CD8-positive, alpha-beta memory T cell (primary cell): ENCODE measurements at regions of chr11 and their contacts with region 1.

Region 1: DNA sequence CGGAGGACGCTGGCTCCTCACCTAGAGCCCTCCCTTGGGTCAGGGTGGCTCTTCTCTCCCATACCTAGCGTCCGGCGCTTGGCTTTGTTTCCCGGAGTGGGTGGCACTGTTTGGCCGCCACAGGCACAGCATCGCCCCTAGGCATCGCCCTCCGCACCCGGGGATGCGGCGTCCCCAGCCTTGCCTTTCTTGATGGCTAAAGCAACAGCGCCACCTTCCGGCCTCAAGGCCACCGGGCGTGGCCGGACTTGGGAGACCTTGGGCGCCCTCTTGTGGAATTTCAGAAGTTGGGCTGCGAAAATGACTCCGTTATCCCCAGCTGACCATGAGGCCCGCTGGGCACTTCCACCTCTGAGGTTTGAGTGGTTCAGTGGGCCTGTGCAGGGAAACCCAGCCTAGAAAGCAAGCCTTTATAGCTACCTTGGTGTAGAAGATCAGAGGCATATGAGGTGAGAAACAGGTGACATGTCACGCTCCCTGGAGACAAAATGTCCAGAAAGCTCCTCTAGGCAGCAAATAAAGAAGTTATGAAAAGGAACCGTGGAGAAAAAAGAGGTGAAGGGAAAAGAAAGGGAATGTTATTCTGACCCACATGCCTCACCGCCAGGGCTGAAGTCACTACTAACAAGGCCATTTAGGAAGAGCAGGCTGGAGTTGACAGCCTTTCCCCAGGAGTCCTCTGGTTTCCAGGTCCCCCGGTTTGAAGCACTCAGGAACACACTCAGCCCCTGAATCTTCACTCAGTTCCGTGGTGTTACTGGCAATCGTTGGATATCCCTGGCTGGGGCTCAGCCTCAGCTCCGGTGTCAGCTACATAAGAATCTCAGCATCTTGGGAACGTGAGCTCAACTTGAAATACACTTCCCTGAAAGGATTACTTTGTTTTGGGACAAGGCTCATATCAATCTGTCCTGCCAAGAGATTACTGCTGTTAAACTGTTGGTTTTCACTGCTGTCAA is 54.1 kb downstream of the SNX19 start:
- DNase-seq: peak; percentile 78 to 90 (median 81)
- H3K4me3 ChIP-seq: no peak overlapping the region
- H3K4me3 Mint-ChIP-seq: no peak overlapping the region
- H3K27ac ChIP-seq: no peak overlapping the region
- H3K27ac Mint-ChIP-seq: peak overlapping the region in 1 of 8 donors; percentile 33
- H3K4me1 ChIP-seq: peaks cover 4% of the 10 kb centered on the region
- H3K4me1 Mint-ChIP-seq: peaks cover 0 to 8% (median 5%) of the 10 kb centered on the region in 3 donors
- H3K27me3 ChIP-seq: no peaks in the 10 kb centered on the region
- H3K27me3 Mint-ChIP-seq: peaks cover under 1 to 2% of the 10 kb centered on the region in 2 donors

Region 2: GRCh38 chr11:130427581-130428315 is 434.4 kb before region 1 on chr11:
- CTCF ChIA-PET with region 1: interaction called, 115 read pairs
- POLR2A ChIA-PET with region 1: no interaction called
- DNase-seq: peak in 1 of 5 donors; percentile 9
- H3K4me3 ChIP-seq: no peak overlapping the region
- H3K4me3 Mint-ChIP-seq: peak overlapping the region in 3 of 7 donors; percentile 15 to 76 (median 58)
- H3K27ac ChIP-seq: no peak overlapping the region
- H3K27ac Mint-ChIP-seq: no peak overlapping the region
- H3K4me1 ChIP-seq: no peaks in the 10 kb centered on the region
- H3K4me1 Mint-ChIP-seq: peaks cover 14 to 18% (median 14%) of the 10 kb centered on the region in 3 donors
- H3K27me3 ChIP-seq: peaks cover 39% of the 10 kb centered on the region
- H3K27me3 Mint-ChIP-seq: peaks cover 39 to 66% of the 10 kb centered on the region in 2 donors

Region 3: GRCh38 chr11:130850185-130850944 is 11.8 kb before region 1 on chr11:
- CTCF ChIA-PET with region 1: interaction called, 19 read pairs
- POLR2A ChIA-PET with region 1: no interaction called
- DNase-seq: no peak
- H3K4me3 ChIP-seq: no peak overlapping the region
- H3K4me3 Mint-ChIP-seq: no peak overlapping the region
- H3K27ac ChIP-seq: no peak overlapping the region
- H3K27ac Mint-ChIP-seq: peak overlapping the region in 1 of 8 donors; percentile 29
- H3K4me1 ChIP-seq: no peaks in the 10 kb centered on the region
- H3K4me1 Mint-ChIP-seq: no peaks in the 10 kb centered on the region
- H3K27me3 ChIP-seq: no peaks in the 10 kb centered on the region
- H3K27me3 Mint-ChIP-seq: peaks cover 10 to 14% of the 10 kb centered on the region in 2 donors

Region 4: GRCh38 chr11:130894322-130895025 is 32.3 kb after region 1 on chr11:
- CTCF ChIA-PET with region 1: interaction called, 13 read pairs
- POLR2A ChIA-PET with region 1: no interaction called
- DNase-seq: peak; percentile 34 to 73 (median 52)
- H3K4me3 ChIP-seq: no peak overlapping the region
- H3K4me3 Mint-ChIP-seq: no peak overlapping the region
- H3K27ac ChIP-seq: no peak overlapping the region
- H3K27ac Mint-ChIP-seq: peak overlapping the region in 3 of 8 donors; percentile 26 to 49 (median 31)
- H3K4me1 ChIP-seq: no peaks in the 10 kb centered on the region
- H3K4me1 Mint-ChIP-seq: peaks cover 0 to 9% (median 8%) of the 10 kb centered on the region in 3 donors
- H3K27me3 ChIP-seq: no peaks in the 10 kb centered on the region
- H3K27me3 Mint-ChIP-seq: no peaks in the 10 kb centered on the region